Natural killer cell (primary cell): ENCODE measurements at regions of chrX and their contacts with region 1.

Region 1: GRCh38 chrX:81121513-81122382 is 80.0 kb downstream of the HMGN5 start:
- DNase-seq: peak; percentile 78 to 90
- ATAC-seq: peak; percentile 91 to 96 (median 94)
- H3K4me3 ChIP-seq: peak overlapping the region; percentile 82
- H3K4me3 Mint-ChIP-seq: peak overlapping the region; percentile 93
- H3K27ac ChIP-seq: no peak overlapping the region
- H3K27ac Mint-ChIP-seq: peak overlapping the region; percentile 44 to 82
- H3K4me1 ChIP-seq: peaks cover 9% of the 10 kb centered on the region
- H3K4me1 Mint-ChIP-seq: peaks cover 22 to 25% of the 10 kb centered on the region in 2 donors
- H3K27me3 ChIP-seq: peaks cover 3% of the 10 kb centered on the region
- H3K27me3 Mint-ChIP-seq: peaks cover 3 to 32% of the 10 kb centered on the region in 2 donors
- CTCF ChIP-seq: no peak

Region 2: DNA sequence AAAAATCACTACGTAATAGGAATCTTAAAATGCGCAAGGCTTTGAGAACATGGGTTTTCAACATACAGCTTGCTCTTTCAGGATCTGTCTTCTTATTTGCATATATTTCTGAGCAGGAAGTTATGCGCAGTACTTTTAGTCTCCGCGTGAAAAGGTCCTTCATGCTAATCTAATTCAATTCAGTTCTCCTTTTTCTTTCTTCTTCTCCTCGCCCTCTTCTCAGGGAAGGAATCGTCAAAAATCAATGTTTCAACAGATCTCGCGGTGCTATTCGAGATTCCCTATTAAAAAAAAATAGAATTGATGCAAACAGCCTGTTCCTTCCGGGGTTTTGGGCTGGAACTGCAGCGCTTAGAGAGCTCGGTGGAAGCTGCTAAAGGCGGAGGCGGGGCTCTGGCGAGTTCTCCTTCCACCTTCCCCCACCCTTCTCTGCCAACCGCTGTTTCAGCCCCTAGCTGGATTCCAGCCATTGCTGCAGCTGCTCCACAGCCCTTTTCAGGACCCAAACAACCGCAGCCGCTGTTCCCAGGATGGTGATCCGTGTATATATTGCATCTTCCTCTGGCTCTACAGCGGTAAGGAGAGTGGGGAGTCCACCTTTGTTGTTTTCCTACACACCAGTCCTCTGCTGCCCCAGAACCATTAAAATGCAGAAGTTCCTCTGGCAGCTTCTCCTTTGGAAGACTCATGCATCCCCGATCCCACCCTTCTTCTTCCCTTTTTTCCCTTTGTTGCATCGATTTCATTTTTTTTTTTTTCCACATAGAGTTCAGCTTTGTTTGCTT is 80.1 kb after region 1 on chrX and contains the starts of genes HMGN5 and SH3BGRL:
- intact Hi-C with region 1: loop called (anchors 2 kb)
- DNase-seq: peak; percentile 53 to 83
- ATAC-seq: peak; percentile 96 to 98 (median 96)
- H3K4me3 ChIP-seq: peak within 1 kb of the TSS; percentile 95
- H3K4me3 Mint-ChIP-seq: peak within 1 kb of the TSS; percentile 91
- H3K27ac ChIP-seq: peak within 1 kb of the TSS; percentile 78
- H3K27ac Mint-ChIP-seq: peak within 1 kb of the TSS; percentile 92 to 93
- H3K4me1 ChIP-seq: peaks cover 2% of the 10 kb centered on the region
- H3K4me1 Mint-ChIP-seq: peaks cover 39 to 46% of the 10 kb centered on the region in 2 donors
- H3K27me3 ChIP-seq: no peaks in the 10 kb centered on the region
- H3K27me3 Mint-ChIP-seq: no peaks in the 10 kb centered on the region
- CTCF ChIP-seq: no peak
- total RNA-seq, gene HMGN5: 0.95 to 1.3 (median 1.3) TPM
- total RNA-seq, gene SH3BGRL: 103 to 108 (median 108) TPM